Activated CD4-positive, alpha-beta memory T cell treated with anti-CD3 and anti-CD28 coated beads, Interleukin-2, amount 10 ng/mL, durations not matched to agents 7 days and 5 days (primary cell): ENCODE measurements at regions of chr1 and their contacts with region 1.

Region 1: DNA sequence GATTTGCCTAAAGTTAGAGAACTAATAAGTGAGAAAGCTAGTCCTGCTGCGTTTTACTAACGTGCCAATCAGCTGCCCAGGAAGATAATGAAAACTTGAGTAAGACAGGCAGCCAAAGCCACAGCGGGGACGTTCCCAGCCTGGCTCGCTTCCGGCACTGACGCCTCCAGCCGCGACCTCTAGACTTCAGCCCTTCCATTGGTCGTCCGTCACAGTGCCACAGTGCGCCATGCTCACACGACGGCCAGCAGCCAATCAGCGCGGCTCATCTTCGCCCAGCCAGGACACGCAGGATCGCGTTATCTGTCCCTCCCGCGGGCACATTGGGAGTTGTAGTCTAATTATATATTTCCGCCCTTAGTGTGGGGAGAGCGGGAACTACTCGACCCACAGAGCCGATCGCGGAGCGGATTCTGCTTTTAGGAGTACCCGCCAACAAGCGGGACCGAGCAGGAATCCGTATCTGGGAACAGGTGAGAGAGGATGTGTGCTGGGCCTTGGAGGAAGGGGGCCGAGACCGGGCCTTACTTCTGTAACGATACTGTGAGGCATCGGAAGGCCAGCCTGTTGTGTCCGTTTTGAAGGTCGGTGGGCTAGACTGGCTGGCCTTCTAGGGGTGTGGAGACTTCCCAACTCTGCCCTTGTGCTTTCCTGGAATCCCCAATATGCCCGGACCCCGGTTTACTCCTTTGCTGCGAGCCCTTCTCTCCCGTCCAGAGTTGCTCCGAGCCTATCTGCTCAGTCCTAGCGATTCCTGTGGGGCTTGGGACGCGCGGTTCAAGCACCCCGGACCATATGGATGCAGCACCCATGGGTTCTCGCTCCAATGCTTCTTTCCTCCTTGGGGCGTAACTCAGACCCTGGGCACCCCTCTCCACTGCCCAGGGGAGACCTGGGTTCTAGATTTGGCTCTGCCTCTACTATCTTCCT is at the start of gene FDPS:
- DNase-seq: peak; percentile 99
- H3K4me3 Mint-ChIP-seq: peak within 1 kb of the TSS; percentile 92
- H3K27ac Mint-ChIP-seq: peak within 1 kb of the TSS; percentile 97
- H3K4me1 Mint-ChIP-seq: peaks cover 50% of the 10 kb centered on the region
- H3K27me3 Mint-ChIP-seq: no peaks in the 10 kb centered on the region
- total RNA-seq, gene FDPS: 350 to 352 TPM

Region 2: DNA sequence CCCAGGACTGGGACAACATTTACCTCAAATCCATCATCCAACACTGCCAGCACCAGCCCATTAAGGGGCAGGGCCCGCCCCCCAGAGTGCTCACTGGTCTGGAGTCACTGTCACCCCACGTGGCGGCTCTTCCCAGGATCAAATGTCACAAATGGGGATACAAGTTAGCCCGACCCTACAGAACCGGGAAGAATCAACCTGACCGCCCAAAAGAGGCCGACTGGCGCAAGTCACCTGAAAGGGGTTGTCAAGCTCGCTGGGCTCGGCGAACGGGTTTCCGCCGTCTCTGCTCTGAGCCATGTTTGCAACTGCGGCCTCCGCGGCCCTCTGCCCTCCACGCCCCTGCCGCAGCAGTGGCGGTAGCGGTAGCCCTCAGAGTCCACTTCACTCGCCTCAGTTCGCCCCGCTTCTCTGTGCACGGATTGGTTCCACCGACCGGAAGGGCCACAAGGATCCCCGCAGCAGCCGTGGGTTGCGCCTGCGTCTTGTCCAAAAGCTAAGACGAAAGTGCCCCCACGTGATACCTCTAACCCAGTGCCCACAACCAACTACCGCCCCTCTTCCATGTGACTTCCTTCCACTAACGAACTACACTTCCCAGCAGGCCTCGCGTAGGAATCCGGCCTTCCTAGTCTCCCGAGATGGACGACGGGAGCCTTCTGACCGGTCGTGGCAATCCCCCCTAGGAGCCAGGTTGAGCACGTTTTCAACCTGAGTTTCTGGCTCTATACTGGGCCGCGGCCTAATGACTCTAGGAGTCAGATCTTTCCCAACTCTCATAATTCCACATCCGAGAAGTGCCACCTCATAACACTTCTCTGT is 46.7 kb before region 1 on chr1 and contains the start of gene SCAMP3:
- CTCF ChIA-PET with region 1: no interaction called
- POLR2A ChIA-PET with region 1: interaction called, 10 read pairs
- DNase-seq: peak; percentile 90
- H3K4me3 Mint-ChIP-seq: peak within 1 kb of the TSS; percentile 98
- H3K27ac Mint-ChIP-seq: peak within 1 kb of the TSS; percentile 91
- H3K4me1 Mint-ChIP-seq: peaks cover 44% of the 10 kb centered on the region
- H3K27me3 Mint-ChIP-seq: no peaks in the 10 kb centered on the region
- total RNA-seq, gene SCAMP3: 87.5 to 91.9 TPM

Region 3: GRCh38 chr1:155277070-155277895 is 31.5 kb before region 1 on chr1 and contains the start of gene HCN3:
- CTCF ChIA-PET with region 1: interaction called, 4 read pairs
- POLR2A ChIA-PET with region 1: interaction called, 10 read pairs
- DNase-seq: peak; percentile 93
- H3K4me3 Mint-ChIP-seq: peak within 1 kb of the TSS; percentile 56
- H3K27ac Mint-ChIP-seq: no peak within 1 kb of the TSS
- H3K4me1 Mint-ChIP-seq: peaks cover 31% of the 10 kb centered on the region
- H3K27me3 Mint-ChIP-seq: peaks cover 4% of the 10 kb centered on the region
- total RNA-seq, gene HCN3: 3.7 to 4.9 TPM

Region 4: DNA sequence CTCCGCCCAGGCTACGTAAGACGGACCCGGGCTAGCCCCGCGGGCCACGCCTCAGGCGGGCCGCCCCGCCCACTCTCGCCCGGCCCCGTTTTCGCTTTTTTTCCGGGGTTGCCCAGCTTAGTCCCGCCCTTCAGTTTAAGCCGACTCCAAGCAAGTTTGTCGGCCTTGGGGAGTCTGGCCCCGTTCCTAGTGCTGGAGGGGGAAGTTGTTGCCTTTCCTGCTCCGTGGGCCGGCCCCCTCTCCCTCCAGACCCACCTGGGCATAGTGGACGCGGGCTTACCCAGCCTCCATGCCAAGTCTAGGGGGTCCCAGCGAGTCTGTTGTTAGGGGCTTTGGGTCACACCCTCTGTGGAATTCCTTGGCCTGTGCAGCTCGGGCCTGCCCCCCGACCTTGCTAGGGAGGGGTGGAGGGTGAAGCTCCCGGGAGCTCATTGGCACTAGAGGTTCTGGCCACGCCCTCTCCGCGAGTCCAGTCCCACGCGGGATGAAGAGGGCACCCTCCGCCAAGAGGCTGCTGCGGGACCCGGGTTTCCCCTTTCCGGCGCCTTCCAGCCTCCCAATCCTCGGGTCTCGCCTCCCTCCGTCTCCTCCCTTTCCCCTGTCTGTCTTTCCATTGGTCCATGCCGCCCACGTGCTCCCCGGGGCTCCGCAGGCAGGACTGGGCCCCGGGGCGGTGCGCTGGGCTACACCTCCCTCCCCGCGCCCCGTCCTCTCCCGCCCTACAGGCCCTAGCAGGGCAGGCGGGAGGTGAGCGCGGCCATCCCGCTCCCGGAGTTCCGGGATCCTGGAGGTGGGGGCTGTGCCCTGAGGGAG is 15.2 kb after region 1 on chr1:
- CTCF ChIA-PET with region 1: interaction called, 14 read pairs
- POLR2A ChIA-PET with region 1: interaction called, 50 read pairs
- DNase-seq: peak; percentile 92
- H3K4me3 Mint-ChIP-seq: peak overlapping the region; percentile 85
- H3K27ac Mint-ChIP-seq: peak overlapping the region; percentile 78
- H3K4me1 Mint-ChIP-seq: peaks cover 46% of the 10 kb centered on the region
- H3K27me3 Mint-ChIP-seq: no peaks in the 10 kb centered on the region

Region 5: DNA sequence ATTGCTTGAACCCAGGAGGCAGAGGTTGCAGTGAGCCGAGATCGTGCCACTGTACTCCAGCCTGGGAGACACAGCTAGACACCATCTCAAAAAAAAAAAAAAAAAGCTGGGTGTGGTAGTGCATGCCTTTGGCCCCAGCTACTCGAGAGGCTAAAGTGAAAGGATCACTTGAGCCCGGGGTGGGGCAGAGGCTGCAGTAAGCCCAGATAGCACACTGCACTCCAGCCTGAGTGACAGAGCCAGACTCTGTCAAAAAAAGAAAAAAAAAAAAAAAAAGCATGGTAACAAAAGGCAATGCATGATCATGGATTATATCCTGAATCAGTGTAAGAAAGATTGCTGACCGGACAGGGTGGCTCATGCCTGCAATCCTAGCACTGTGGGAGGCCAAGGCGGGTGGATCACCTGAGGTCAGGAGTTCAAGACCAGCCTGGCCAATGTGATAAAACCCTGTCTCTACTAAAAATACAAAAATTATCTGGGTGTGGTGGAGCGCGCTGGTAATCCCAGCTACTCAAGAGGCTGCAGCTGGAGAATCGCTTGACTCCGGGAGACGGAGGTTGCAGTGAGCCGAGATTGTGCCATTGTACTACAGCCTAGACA is 88.2 kb after region 1 on chr1:
- CTCF ChIA-PET with region 1: no interaction called
- POLR2A ChIA-PET with region 1: no interaction called
- DNase-seq: no peak
- H3K4me3 Mint-ChIP-seq: no peak overlapping the region
- H3K27ac Mint-ChIP-seq: no peak overlapping the region
- H3K4me1 Mint-ChIP-seq: no peaks in the 10 kb centered on the region
- H3K27me3 Mint-ChIP-seq: no peaks in the 10 kb centered on the region

Region 6: DNA sequence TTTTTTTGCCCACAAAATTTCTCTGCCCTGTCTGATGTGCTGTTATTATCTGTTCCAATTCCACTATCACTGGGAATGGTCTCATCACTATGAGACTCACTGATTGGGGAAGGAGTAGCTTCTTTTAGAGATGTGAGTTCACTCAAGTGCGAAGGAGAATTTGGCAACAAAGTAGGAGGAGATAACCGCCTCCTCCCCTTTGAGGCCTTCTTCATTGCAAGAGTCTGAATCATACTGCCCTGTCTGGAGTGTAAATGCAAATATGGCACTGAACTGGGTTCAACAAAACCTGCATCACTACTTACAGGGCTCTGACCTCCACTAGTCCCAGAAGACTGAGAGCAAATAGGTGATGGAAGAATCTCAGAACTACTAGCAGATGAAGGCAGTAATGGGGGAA is 170.4 kb after region 1 on chr1:
- CTCF ChIA-PET with region 1: no interaction called
- POLR2A ChIA-PET with region 1: no interaction called
- DNase-seq: no peak
- H3K4me3 Mint-ChIP-seq: no peak overlapping the region
- H3K27ac Mint-ChIP-seq: no peak overlapping the region
- H3K4me1 Mint-ChIP-seq: no peaks in the 10 kb centered on the region
- H3K27me3 Mint-ChIP-seq: no peaks in the 10 kb centered on the region